Right cardiac atrium (tissue), 5 donors: ENCODE measurements at regions of chr6 and their contacts with region 1.

Region 1: DNA sequence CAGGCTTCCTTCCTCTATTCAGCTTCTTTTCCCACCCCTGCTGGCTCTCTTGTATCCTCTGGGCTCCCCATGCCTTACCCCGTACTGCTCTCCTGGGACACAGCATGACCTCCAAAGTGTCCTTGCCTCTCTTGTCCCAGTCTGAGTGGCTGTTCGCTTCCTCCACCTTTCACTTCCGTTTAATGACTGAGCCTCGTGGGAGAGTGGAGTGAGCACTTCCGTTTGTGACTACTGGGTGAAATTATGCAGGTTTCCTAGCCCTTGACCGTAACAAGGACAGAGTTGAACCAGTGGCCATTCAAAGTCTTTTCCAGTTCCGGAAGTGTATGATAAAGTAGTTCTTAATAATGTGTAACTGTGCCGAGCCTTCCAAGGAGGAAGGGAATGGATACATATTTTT is 109.2 kb downstream of the ARID1B start:
- DNase-seq: peak in 1 of 3 donors; percentile 15
- ATAC-seq: peak; percentile 41 to 74
- H3K4me3 ChIP-seq: no peak overlapping the region
- H3K27ac ChIP-seq: peak overlapping the region; percentile 5
- H3K4me1 ChIP-seq: peaks cover 30% of the 10 kb centered on the region
- H3K27me3 ChIP-seq: no peaks in the 10 kb centered on the region

Region 2: DNA sequence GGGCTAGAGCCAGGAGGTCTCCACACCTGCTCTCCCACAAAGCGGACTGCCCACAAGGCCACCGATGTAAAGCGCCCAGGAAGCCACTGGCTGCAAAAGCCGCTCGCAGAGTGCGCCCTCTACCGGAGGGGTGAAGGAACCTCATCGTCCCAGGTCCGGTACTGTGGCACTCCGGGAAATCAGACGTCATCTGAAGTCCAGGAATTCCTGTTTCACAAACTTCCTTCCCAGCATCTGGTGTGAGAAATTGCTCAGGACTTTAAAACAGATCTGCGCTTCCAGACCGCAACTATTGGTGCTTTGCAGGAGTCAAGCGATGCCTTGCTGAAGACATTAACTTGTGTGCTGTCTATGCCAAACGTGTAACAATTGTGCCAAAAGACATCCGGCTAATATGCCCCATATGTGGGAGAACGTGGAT is 224.4 kb before region 1 on chr6:
- intact Hi-C with region 1: no loop called
- DNase-seq: no peak
- ATAC-seq: no peak
- H3K4me3 ChIP-seq: no peak overlapping the region
- H3K27ac ChIP-seq: no peak overlapping the region
- H3K4me1 ChIP-seq: peaks cover 3% of the 10 kb centered on the region
- H3K27me3 ChIP-seq: no peaks in the 10 kb centered on the region

Region 3: GRCh38 chr6:157021344-157021992 is 135.1 kb after region 1 on chr6:
- intact Hi-C with region 1: loop called in 1 of 4 experiments (anchors 10 kb)
- DNase-seq: peak; percentile 94 to 97 (median 96)
- ATAC-seq: peak; percentile 97
- H3K4me3 ChIP-seq: peak overlapping the region; percentile 80
- H3K27ac ChIP-seq: peak overlapping the region; percentile 99
- H3K4me1 ChIP-seq: peaks cover 3% of the 10 kb centered on the region
- H3K27me3 ChIP-seq: no peaks in the 10 kb centered on the region